ENCODE measurements at regions of chr20 and their contacts with region 1.

Region 1: DNA sequence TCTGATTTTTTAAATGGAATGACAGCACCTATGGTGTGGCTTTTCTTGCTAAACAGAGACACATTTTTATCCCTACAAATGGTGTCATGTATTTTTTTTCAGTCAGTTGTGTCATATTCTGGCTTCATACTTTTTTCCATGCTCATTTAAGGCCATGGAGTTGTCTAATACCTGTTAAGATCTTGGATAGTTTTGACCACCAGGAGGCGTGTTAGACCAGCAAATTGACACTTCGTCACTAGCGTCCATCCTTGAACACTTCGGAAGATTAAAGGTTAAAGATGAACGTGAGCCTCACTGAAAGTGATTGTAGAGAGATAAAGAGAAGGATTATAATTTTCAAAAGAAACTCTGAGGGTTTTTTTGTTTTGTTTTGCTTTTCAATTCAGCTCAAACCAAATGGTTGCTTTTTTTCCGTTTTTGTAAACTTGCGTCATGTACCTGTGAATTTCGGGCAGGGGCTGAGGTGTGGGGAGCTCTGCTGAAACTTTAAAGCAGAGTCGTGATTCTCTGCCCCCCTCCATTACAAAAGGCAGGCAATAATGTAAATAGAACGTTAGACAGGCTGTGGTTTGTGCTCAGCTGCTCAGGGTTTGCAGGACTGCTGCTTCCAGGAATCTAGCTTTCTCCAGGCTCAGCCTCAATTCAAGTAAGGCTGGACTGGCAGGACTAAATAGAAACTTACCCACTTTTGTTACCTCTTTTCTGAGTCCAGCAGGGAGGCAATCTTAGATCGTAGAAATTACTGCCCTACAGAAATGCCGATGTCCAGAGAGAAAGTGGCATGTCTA is 245.1 kb downstream of the FOXA2 start:
- DNase-seq: no peak
- ATAC-seq: peak; percentile 77
- H3K4me3 ChIP-seq: no peak overlapping the region
- H3K27ac ChIP-seq: no peak overlapping the region
- H3K4me1 ChIP-seq: no peaks in the 10 kb centered on the region
- H3K27me3 ChIP-seq: no peaks in the 10 kb centered on the region

Region 2: DNA sequence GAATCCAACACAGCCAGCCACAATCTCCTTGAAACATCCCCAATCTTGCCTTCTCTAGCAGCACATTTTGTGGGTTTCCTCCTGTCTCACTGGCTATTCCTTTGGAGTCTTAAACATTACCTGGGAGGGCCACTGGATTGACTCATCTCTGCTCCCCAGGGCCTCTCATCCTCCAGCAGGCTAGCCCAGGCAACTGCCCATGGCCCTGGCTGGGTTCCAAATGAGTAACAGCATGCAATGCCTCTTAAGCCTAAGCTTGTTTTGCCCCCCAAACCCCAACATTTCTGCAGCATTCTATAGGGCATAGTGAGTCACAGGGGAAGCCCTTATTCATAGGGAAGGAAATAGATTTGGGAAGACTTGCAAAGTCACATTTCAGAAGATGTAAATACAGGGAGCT is 40.2 kb after region 1 on chr20:
- intact Hi-C with region 1: no loop called
- DNase-seq: no peak
- ATAC-seq: no peak
- H3K4me3 ChIP-seq: no peak overlapping the region
- H3K27ac ChIP-seq: no peak overlapping the region
- H3K4me1 ChIP-seq: no peaks in the 10 kb centered on the region
- H3K27me3 ChIP-seq: no peaks in the 10 kb centered on the region

Region 3: DNA sequence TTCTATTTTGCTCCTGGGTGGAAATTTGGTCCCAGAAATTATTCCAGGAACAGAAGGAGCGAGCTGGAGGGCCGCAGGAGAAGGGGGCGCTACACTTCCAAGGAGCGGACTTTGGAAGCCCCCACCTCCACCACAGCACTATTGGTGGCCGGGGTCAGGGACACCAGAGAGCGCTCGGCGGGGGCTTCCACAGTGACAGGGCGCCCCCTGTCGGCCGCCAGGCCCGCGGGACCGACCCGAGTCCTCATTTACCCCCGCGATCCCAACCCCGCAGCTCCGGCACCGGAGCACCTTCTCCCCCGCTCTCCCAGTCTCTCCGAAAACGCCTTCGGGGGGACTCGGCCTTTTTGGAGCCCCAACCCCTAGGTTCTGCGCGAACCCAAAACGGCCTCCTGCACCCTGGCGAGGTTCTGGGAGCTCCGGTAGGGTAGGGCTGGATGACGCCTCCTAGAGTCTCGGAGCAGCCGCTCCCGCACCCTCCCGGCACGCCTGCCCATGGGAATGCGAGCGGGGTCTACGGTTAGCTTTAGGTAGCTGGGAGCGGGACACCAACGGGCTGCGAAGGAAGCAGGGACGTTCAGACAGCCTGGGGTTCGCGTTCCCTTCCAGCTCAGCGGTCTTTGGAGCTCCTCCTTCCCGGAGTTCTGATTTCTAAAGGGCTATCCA is 247.5 kb after region 1 on chr20:
- intact Hi-C with region 1: loop called in 1 of 2 experiments (anchors 5 kb)
- DNase-seq: peak in 1 of 2 donors; percentile 81
- ATAC-seq: peak; percentile 48
- H3K4me3 ChIP-seq: no peak overlapping the region
- H3K27ac ChIP-seq: no peak overlapping the region
- H3K4me1 ChIP-seq: no peaks in the 10 kb centered on the region
- H3K27me3 ChIP-seq: peaks cover 0 to 2% of the 10 kb centered on the region in 2 donors